ENCODE measurements at regions of chr19 and their contacts with region 1.

Region 1: GRCh38 chr19:2552859-2553258 is 76.9 kb downstream of the GADD45B start:
- DNase-seq: no peak

Region 2: DNA sequence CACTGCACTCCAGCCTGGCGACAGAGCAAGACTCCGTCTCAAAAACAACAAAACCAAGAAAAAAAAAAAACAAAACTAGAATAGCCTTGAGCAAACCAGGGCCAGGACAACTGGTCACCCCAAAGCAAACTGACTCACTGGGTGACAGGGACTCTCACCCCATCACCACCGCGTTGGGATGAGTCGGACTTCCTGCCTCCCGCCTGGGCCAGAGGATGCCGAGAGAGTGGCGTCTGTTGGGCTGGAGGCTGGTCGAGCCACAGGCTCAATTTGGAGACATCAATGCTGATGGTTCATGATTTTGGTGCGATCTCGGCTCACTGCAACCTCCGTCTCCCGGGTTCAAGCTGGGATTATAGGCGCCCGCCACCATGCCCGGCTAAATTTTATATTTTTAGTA is 181.2 kb before region 1 on chr19:
- intact Hi-C with region 1: no loop called
- DNase-seq: no peak

Region 3: GRCh38 chr19:2391118-2391725 is 161.6 kb before region 1 on chr19:
- intact Hi-C with region 1: no loop called
- DNase-seq: peak in 34 of 42 donors; percentile 22 to 83 (median 50)

Region 4: GRCh38 chr19:2588081-2588777 is 35.4 kb after region 1 on chr19:
- intact Hi-C with region 1: no loop called
- DNase-seq: peak in 13 of 42 donors; percentile 22 to 71 (median 39)

Region 5: GRCh38 chr19:2602391-2603181 is 49.7 kb after region 1 on chr19:
- intact Hi-C with region 1: loop called (anchors 10 kb)
- DNase-seq: peak in 30 of 42 donors; percentile 24 to 82 (median 61)